MCF 10A (cell line): ENCODE measurements at regions of chr21 and their contacts with region 1.

Region 1: DNA sequence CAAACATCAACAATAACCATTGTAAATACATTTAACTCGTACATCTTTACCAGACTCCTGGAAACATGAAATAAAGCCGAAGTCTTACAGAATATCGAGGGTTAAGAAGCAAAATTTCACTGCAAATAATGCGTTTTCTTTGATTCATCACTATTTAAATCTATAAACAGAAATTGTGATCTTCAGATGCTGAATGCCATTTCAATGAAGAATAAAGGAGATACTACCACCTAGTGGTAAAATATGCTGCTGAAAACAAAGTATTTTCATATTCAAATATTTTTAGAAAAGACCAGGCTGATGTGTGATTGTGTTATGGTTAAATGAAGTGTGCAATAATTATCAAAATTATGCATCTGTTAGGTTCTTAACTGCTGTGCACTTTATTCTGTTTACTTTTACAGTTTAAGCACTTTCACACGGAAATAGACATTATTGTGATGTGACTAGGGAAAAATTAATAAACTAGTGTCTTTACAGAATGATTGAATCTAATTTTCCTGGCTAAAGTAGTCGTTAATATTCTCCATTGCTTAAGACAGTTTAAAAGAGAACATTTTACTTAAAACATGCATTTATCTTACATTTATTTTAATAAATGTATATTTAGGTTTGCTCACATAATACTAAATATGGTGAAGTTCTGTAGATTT is 1093.1 kb downstream of the MRPL39 start:
- DNase-seq: peak; percentile 33
- H3K4me3 Mint-ChIP-seq: no peak overlapping the region
- H3K27ac Mint-ChIP-seq: no peak overlapping the region
- H3K4me1 Mint-ChIP-seq: no peaks in the 10 kb centered on the region
- H3K27me3 Mint-ChIP-seq: no peaks in the 10 kb centered on the region
- CTCF ChIP-seq: peak; percentile 46

Region 2: GRCh38 chr21:23853796-23854379 is 660.3 kb before region 1 on chr21:
- CTCF ChIA-PET with region 1: interaction called, 7 read pairs
- POLR2A ChIA-PET with region 1: no interaction called
- intact Hi-C with region 1: loop called (anchors 1 kb)
- DNase-seq: peak; percentile 52
- H3K4me3 Mint-ChIP-seq: no peak overlapping the region
- H3K27ac Mint-ChIP-seq: no peak overlapping the region
- H3K4me1 Mint-ChIP-seq: peaks cover 5% of the 10 kb centered on the region
- H3K27me3 Mint-ChIP-seq: no peaks in the 10 kb centered on the region
- CTCF ChIP-seq: peak; percentile 44

Region 3: GRCh38 chr21:24045775-24046215 is 468.4 kb before region 1 on chr21:
- CTCF ChIA-PET with region 1: no interaction called
- POLR2A ChIA-PET with region 1: no interaction called
- intact Hi-C with region 1: loop called (anchors 10 kb)
- DNase-seq: peak; percentile 94
- H3K4me3 Mint-ChIP-seq: no peak overlapping the region
- H3K27ac Mint-ChIP-seq: peak overlapping the region; percentile 18
- H3K4me1 Mint-ChIP-seq: peaks cover 6% of the 10 kb centered on the region
- H3K27me3 Mint-ChIP-seq: no peaks in the 10 kb centered on the region
- CTCF ChIP-seq: peak; percentile 13

Region 4: GRCh38 chr21:24375201-24375600 is 139.0 kb before region 1 on chr21:
- CTCF ChIA-PET with region 1: no interaction called
- POLR2A ChIA-PET with region 1: no interaction called
- intact Hi-C with region 1: loop called (anchors 5 kb)
- DNase-seq: no peak
- H3K4me3 Mint-ChIP-seq: no peak overlapping the region
- H3K27ac Mint-ChIP-seq: no peak overlapping the region
- H3K4me1 Mint-ChIP-seq: peaks cover 3% of the 10 kb centered on the region
- H3K27me3 Mint-ChIP-seq: no peaks in the 10 kb centered on the region
- CTCF ChIP-seq: no peak

Region 5: DNA sequence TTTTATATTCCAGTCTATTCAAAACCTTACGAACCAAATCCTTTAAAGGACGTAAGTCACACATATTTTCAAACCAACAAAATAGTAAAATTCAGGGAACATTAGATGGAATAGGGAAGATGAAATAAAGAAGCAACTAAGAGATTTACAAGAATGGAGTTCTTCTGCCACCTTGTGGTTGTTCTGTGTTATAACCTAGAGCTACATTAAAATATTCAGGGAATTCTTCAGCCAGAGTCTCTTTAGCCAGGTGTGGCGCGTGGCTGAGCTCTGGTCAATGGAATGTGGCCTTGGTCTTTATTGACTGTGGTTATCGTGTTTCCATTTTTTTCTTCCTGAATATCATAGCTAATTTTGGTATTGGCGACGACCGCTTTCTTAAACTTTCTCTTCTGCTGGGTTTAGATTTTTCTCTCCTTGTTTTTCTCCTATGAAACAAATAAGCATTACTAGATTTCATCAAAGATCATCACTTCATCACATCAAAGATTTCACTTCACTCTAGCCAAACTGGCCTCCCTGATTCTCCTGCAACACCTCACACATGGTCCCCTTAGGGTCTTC is 871.8 kb after region 1 on chr21:
- CTCF ChIA-PET with region 1: no interaction called
- POLR2A ChIA-PET with region 1: no interaction called
- intact Hi-C with region 1: loop called (anchors 5 kb)
- DNase-seq: peak; percentile 75
- H3K4me3 Mint-ChIP-seq: no peak overlapping the region
- H3K27ac Mint-ChIP-seq: no peak overlapping the region
- H3K4me1 Mint-ChIP-seq: peaks cover 12% of the 10 kb centered on the region
- H3K27me3 Mint-ChIP-seq: no peaks in the 10 kb centered on the region
- CTCF ChIP-seq: peak; percentile 73